Dorsolateral prefrontal cortex (tissue), 120 donors: ENCODE measurements at regions of chr12 and their contacts with region 1.

Region 1: DNA sequence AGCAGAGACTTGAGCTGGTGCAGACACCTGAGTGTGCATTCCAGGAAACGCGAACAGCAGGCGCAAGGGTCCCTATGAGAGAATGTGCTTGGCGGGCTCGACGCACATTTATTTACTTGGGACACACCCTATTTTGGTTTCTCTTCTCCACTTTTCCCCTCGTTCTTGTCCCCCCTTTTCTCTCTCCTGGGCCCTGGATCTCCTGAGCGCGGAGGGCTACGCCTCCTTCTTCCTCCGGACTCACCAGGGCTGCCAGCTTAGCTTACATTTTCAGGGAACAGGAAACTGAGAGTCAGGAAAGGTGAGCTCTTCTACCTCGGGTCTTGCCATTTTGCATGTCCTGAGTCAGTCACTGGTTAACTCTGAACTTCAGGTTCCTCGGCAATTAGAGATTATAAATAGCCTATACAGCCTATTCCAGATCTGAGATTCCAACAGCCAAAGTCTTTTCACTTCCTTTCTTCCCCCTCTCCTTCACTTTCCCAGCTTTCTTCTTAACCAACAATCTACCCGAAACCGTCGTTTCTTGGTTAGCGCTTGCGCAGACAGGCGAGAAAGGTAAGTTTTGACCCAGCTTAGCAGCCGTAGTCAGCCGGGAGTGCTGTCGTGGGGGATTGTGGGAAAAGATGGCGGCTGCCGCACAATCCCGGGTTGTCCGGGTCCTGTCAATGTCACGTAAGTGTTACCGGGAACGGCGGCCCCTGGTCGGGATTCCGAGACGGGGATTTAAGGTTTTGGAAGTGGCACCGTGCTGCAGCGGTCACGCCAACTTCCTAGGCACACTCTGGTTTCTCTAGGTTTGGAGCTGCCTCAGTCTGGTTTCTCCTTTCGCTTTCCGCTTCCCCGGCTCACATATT is at the starts of genes AKAP3 and NDUFA9:
- DNase-seq: peak; percentile 74 to 88 (median 82)
- H3K4me3 ChIP-seq: peak within 1 kb of the TSS; percentile 64 to 99 (median 87)
- H3K27ac ChIP-seq: peak within 1 kb of the TSS; percentile 2 to 94 (median 81)
- H3K27me3 ChIP-seq: no peaks in the 10 kb centered on the region
- CTCF ChIP-seq: peak in 39 of 56 donors; percentile 5 to 58 (median 28)
- total RNA-seq, gene AKAP3: 0.41 to 13.6 (median 3.8) TPM
- total RNA-seq, gene NDUFA9: 42.3 to 124 (median 84.2) TPM

Region 2: DNA sequence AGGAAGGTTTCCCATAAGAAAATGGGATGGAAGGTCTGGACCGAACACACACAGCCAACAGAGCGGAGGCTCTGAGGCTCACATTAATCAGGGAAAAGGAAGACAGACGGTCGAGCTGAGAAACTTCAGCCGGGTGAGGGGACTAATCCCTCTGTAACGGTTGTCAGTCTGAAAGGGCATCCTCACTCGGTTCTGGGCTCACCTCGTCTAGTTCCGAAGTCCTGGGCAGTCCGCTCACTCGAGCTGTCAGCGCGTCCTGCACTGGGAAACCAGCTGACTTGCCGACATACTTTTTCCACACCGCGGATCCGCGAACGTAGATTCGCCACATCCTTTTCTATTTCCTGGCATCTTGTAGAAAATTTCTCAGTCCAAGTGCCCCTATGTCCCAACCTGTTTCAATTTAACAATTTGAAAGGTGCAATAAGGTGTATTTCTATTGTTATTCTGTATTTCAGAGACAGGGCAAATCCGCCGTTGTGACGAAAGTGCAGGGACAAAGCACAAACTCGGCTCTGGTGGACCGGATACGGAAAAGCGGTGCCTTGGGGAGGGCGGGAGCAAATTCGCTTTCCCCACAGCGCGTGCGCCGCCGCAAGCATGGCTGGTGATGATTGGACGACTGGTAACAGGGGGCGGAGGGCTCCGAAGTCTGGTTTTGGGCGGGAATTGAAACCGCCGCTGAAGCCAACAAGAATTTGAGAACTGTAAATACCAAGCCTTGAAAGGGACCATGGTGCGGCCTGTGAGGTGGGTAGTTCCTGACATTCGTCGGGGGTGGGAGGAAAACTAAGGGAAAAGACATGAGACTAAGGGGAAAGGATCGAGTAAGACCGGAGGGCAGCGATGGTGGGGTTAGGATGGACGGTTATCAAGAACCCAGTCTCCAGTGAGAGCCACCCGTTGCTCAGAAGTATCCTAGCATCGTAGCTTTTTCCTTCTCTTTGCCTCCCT is 110.2 kb before region 1 on chr12 and contains the start of gene RAD51AP1:
- intact Hi-C with region 1: loop called (anchors 2 to 5 kb)
- DNase-seq: peak; percentile 88 to 95 (median 94)
- H3K4me3 ChIP-seq: peak within 1 kb of the TSS; percentile 51 to 100 (median 88)
- H3K27ac ChIP-seq: peak within 1 kb of the TSS; percentile 71 to 99 (median 96)
- H3K27me3 ChIP-seq: no peaks in the 10 kb centered on the region
- CTCF ChIP-seq: peak in 29 of 56 donors; percentile 4 to 57 (median 34)
- total RNA-seq, gene RAD51AP1: 0.65 to 6.6 (median 2.8) TPM

Region 3: GRCh38 chr12:4562034-4562657 is 86.6 kb before region 1 on chr12 and contains the start of gene DYRK4:
- intact Hi-C with region 1: no loop called
- DNase-seq: peak; percentile 40 to 75 (median 64)
- H3K4me3 ChIP-seq: peak within 1 kb of the TSS; percentile 24 to 76 (median 54)
- H3K27ac ChIP-seq: peak within 1 kb of the TSS in 17 of 59 donors; percentile 1 to 83 (median 28)
- H3K27me3 ChIP-seq: peaks cover 0 to 9% (median 0%) of the 10 kb centered on the region in 45 donors
- CTCF ChIP-seq: peak in 5 of 56 donors; percentile 18 to 27 (median 21)
- total RNA-seq, gene DYRK4: 23.2 to 53.0 (median 37.2) TPM

Region 4: DNA sequence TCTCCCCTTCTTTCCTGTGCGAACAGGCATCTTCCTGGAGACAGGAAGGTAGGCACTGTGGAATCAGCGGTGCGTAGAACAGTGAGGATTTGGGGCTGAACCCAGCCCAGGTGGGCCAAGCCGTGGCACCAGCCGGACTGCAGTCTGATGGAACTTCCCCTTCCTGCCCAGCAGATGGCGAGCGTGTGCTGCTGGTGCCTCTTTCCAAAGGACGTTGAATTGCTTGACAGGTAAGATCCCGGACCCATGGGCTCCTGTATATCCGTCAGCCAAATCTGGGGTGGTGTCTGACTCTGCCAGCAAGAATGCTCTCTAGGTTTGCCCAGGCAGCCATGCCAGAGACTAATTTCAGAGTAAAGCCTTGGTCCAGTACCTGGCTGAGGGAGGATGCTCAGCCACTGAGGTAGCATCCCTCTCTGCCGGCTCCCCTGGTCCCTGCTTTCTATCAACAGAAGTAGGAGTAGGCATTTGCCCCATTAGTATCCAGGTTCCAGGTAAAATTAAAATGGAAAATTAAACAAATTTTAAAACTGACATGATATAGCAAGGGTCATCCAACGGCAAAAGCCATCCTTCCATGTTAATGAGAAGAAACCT is 373.8 kb after region 1 on chr12:
- intact Hi-C with region 1: no loop called
- DNase-seq: peak in 1 of 10 donors; percentile 69
- H3K4me3 ChIP-seq: no peak overlapping the region
- H3K27ac ChIP-seq: no peak overlapping the region
- H3K27me3 ChIP-seq: peaks cover 0 to 5% (median 0%) of the 10 kb centered on the region in 45 donors
- CTCF ChIP-seq: peak; percentile 40 to 98 (median 90)